ENCODE measurements at regions of chr1 and their contacts with region 1.

Region 1: DNA sequence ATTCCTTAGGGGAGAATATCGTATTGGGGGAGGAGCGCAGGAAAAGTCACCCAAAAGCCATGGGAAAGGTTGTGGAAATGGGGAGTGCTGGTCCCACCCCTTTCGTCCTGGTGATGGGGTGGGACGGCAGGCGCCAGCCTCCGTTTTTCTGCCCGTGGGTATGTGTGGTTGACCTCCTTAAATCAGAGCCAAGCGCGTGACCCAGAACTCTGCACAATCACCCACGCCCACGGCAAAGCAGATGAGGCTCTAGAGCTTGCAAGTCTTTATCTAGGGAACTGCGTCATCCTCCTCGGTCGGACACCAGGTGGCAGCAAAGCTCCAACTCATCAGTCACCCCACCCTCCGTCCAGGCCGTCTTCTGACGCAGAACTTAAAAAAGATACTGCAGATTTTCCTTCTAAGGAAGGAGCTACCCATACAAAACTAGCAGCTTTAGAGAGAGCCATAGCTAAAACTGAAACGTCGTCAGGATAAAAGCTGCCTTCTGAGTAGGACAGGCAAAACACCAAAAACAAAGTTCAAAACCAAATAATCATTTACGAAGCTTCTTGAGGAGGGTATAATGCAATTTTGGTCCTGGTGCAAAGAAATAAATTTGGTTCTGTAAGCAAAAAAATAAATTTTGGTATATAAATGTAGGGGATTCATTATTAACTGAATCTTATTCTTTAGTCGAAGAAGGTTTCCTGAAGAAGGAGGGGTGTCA is 62.0 kb downstream of the TBX19 start:
- DNase-seq: peak; percentile 91 to 94
- H3K4me3 ChIP-seq: peak overlapping the region; percentile 30 to 44
- H3K27ac ChIP-seq: peak overlapping the region; percentile 67 to 76
- H3K4me1 ChIP-seq: peaks cover 0 to 17% (median 7%) of the 10 kb centered on the region in 4 donors
- H3K27me3 ChIP-seq: no peaks in the 10 kb centered on the region
- CTCF ChIP-seq: peak; percentile 71 to 86

Region 2: DNA sequence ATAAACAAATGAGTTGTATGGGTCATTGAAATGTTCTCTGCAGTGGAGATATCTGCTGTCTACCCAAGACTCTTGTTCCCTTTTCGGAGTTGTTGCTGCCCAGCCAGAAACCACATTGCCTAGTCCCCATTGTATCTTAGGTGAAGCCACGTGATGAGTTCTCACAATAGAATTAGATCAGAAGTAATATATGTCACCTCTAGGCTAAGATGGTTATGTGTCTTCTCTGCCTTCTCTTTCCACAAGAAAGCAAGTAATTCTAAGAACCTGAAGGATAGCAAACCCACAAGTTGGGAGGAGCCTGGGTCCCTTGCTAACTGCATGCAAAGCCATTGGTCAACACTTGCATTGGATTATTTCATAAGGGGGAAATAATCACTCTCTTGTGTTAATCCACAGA is 505.4 kb before region 1 on chr1:
- intact Hi-C with region 1: no loop called
- DNase-seq: no peak
- H3K4me3 ChIP-seq: no peak overlapping the region
- H3K27ac ChIP-seq: no peak overlapping the region
- H3K4me1 ChIP-seq: no peaks in the 10 kb centered on the region
- H3K27me3 ChIP-seq: no peaks in the 10 kb centered on the region
- CTCF ChIP-seq: no peak

Region 3: DNA sequence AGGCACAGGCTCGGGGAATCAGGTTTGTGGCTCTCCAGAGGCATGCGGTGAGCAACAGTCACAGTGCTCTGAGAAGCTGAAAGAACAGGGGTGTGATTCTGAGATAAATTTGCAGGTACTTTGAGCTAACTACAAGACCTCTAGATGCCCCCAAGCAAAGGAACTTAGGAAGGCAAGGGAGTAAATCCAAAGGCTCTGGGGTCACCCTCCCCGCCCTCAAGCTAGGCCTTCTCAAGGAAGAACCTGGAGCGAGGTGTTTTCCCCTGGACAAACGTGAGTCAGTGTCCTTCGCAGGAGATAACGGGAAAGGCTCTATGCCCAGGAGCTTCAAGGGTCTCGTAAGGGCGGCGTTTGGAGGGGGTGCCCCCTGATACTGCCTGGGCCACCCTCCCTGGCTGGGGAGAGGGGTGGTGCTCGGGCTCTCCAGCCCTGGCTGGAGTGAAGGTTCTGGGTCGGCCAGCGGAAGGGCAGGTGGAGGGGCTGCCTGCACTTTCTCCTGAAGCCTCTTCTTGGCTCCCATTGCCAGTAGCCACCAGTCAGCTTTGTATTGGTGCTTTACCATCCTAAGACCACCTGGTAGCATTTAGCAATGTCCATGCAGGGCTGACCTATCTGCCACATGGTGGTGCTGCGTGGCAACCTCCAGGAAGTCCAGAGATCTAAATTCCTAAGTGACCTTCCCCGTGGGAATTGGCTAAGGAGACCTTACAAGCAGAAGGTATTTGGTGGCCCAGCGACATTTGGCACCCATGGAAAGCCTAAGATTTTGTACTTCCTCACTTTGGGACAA is 250.0 kb before region 1 on chr1:
- intact Hi-C with region 1: no loop called
- DNase-seq: no peak
- H3K4me3 ChIP-seq: no peak overlapping the region
- H3K27ac ChIP-seq: no peak overlapping the region
- H3K4me1 ChIP-seq: peaks cover 0 to 16% (median 4%) of the 10 kb centered on the region in 4 donors
- H3K27me3 ChIP-seq: no peaks in the 10 kb centered on the region
- CTCF ChIP-seq: peak in 1 of 2 experiments; percentile 24

Region 4: GRCh38 chr1:168572633-168573032 is 229.9 kb after region 1 on chr1:
- intact Hi-C with region 1: loop called (anchors 10 kb)
- DNase-seq: no peak
- H3K4me3 ChIP-seq: no peak overlapping the region
- H3K27ac ChIP-seq: no peak overlapping the region
- H3K4me1 ChIP-seq: no peaks in the 10 kb centered on the region
- H3K27me3 ChIP-seq: no peaks in the 10 kb centered on the region
- CTCF ChIP-seq: no peak